PC-3 (cell line): ENCODE measurements at regions of chr13 and their contacts with region 1.

Region 1: GRCh38 chr13:75798353-75799255 is 162.5 kb downstream of the LMO7 start:
- DNase-seq: peak; percentile 85
- ATAC-seq: peak; percentile 83
- H3K4me3 ChIP-seq: no peak overlapping the region
- H3K27ac ChIP-seq: peak overlapping the region; percentile 89
- H3K4me1 ChIP-seq: peaks cover 46% of the 10 kb centered on the region
- H3K27me3 ChIP-seq: no peaks in the 10 kb centered on the region
- CTCF ChIP-seq: no peak

Region 2: DNA sequence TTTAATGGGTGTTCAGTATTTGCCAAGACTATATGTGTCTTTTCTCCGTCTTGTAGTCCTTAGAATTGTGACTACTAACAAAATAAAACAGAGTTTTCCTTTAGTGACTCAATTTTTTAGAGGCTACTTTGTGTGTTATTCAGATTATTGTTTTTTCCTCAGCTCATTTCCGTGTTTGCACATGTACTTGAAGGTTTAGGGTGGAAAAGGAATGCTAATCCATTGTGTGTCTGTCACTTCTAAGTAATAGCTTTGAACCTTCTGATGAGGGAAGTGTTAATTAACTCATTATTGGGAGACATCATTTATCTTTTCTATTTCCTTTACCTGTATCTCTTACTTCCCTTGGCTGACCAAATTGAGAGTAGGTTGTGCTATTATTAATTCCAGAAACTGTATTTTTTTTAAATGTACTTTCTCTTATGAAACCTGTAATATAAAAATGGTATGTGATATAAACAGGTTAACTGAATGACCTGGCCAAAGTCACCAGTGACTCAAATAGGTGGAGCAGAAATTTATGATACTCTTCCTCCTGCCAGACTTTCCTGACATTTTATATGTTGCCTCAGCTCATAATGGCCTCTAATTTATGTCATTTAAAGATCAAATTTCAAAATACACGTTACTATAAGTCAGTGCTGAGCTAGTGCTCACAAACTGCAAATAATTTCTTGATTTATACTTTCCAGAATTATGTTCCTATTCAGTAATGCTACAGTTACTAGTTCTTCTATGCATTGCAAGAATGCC is 73.7 kb before region 1 on chr13:
- CTCF ChIA-PET with region 1: no interaction called
- POLR2A ChIA-PET with region 1: no interaction called
- intact Hi-C with region 1: loop called (anchors 2 kb)
- DNase-seq: peak; percentile 70
- ATAC-seq: peak; percentile 80
- H3K4me3 ChIP-seq: peak overlapping the region; percentile 0; the same call in 1 of the 2 replicates
- H3K27ac ChIP-seq: peak overlapping the region; percentile 98
- H3K4me1 ChIP-seq: peaks cover 31% of the 10 kb centered on the region
- H3K27me3 ChIP-seq: no peaks in the 10 kb centered on the region
- CTCF ChIP-seq: no peak